Mammary epithelial cell (primary cell): ENCODE measurements at regions of chr9 and their contacts with region 1.

Region 1: GRCh38 chr9:5437254-5438216 is at the start of gene PLGRKT:
- DNase-seq: peak; percentile 89
- H3K4me3 ChIP-seq: peak within 1 kb of the TSS; percentile 67 to 87 (median 75)
- H3K27ac ChIP-seq: peak within 1 kb of the TSS; percentile 82
- H3K4me1 ChIP-seq: peaks cover 30% of the 10 kb centered on the region
- H3K27me3 ChIP-seq: no peaks in the 10 kb centered on the region
- CTCF ChIP-seq: peak in 1 of 2 donors; percentile 26
- total RNA-seq, gene PLGRKT: 13.3 to 31.2 TPM

Region 2: DNA sequence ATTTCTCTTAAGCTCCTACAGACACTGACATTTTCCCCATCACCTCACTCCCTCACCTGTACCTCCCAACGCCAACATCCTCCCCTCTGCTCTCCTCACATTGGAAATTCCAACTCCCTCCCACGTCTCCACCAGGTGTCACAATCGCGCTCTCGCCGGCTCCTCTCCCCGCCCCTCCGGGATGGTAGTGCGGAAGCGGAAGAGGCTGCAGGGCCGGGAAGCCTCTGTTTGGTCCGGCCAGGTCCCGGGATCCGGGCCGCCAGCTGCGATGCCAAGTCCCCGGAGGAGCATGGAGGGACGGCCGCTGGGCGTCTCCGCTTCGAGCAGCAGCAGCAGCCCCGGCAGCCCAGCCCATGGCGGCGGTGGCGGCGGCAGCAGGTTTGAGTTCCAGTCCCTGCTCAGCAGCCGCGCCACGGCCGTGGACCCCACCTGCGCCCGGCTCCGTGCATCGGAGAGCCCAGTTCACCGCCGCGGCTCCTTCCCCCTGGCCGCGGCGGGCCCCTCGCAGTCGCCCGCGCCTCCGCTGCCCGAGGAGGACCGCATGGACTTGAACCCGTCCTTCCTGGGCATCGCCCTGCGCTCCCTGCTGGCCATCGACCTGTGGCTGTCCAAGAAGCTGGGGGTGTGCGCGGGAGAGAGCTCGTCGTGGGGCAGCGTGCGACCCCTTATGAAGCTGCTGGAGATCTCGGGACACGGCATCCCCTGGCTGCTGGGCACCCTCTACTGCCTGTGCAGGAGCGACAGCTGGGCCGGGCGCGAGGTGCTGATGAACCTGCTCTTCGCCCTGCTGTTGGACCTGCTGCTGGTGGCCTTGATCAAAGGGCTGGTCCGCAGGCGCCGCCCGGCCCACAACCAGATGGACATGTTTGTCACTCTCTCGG is 775.2 kb before region 1 on chr9 and contains the start of gene PLPP6:
- CTCF ChIA-PET with region 1: no interaction called
- dilution Hi-C with region 1: no loop called
- in situ Hi-C with region 1: no loop called
- intact Hi-C with region 1: loop called (anchors 10 kb)
- DNase-seq: peak; percentile 95
- H3K4me3 ChIP-seq: peak within 1 kb of the TSS; percentile 76 to 92 (median 87)
- H3K27ac ChIP-seq: peak within 1 kb of the TSS; percentile 60
- H3K4me1 ChIP-seq: peaks cover 49% of the 10 kb centered on the region
- H3K27me3 ChIP-seq: no peaks in the 10 kb centered on the region
- CTCF ChIP-seq: peak in 1 of 2 donors; percentile 56
- total RNA-seq, gene PLPP6: 10.9 to 12.0 TPM

Region 3: GRCh38 chr9:4740638-4741364 is 696.7 kb before region 1 on chr9 and contains the start of gene AK3:
- CTCF ChIA-PET with region 1: interaction called, 6 read pairs
- dilution Hi-C with region 1: no loop called
- in situ Hi-C with region 1: no loop called
- intact Hi-C with region 1: loop called (anchors 5 kb)
- DNase-seq: peak; percentile 79
- H3K4me3 ChIP-seq: peak within 1 kb of the TSS; percentile 76 to 82 (median 80)
- H3K27ac ChIP-seq: peak within 1 kb of the TSS; percentile 73
- H3K4me1 ChIP-seq: peaks cover 37% of the 10 kb centered on the region
- H3K27me3 ChIP-seq: no peaks in the 10 kb centered on the region
- CTCF ChIP-seq: peak in 1 of 2 donors; percentile 41
- total RNA-seq, gene AK3: 36.5 to 73.3 TPM

Region 4: GRCh38 chr9:4750023-4750673 is 687.4 kb before region 1 on chr9:
- CTCF ChIA-PET with region 1: no interaction called
- dilution Hi-C with region 1: no loop called
- in situ Hi-C with region 1: loop called in 1 of 2 experiments (anchors 25 kb)
- intact Hi-C with region 1: loop called (anchors 5 kb)
- DNase-seq: peak; percentile 29
- H3K4me3 ChIP-seq: no peak overlapping the region
- H3K27ac ChIP-seq: no peak overlapping the region
- H3K4me1 ChIP-seq: no peaks in the 10 kb centered on the region
- H3K27me3 ChIP-seq: no peaks in the 10 kb centered on the region
- CTCF ChIP-seq: peak; percentile 61 to 65

Region 5: GRCh38 chr9:5186416-5187169 is 250.9 kb before region 1 on chr9:
- CTCF ChIA-PET with region 1: interaction called, 8 read pairs
- dilution Hi-C with region 1: no loop called
- in situ Hi-C with region 1: loop called in 1 of 2 experiments (anchors 25 kb)
- intact Hi-C with region 1: loop called (anchors 1 kb)
- DNase-seq: peak; percentile 55
- H3K4me3 ChIP-seq: no peak overlapping the region
- H3K27ac ChIP-seq: no peak overlapping the region
- H3K4me1 ChIP-seq: no peaks in the 10 kb centered on the region
- H3K27me3 ChIP-seq: no peaks in the 10 kb centered on the region
- CTCF ChIP-seq: peak; percentile 71 to 87

Region 6: DNA sequence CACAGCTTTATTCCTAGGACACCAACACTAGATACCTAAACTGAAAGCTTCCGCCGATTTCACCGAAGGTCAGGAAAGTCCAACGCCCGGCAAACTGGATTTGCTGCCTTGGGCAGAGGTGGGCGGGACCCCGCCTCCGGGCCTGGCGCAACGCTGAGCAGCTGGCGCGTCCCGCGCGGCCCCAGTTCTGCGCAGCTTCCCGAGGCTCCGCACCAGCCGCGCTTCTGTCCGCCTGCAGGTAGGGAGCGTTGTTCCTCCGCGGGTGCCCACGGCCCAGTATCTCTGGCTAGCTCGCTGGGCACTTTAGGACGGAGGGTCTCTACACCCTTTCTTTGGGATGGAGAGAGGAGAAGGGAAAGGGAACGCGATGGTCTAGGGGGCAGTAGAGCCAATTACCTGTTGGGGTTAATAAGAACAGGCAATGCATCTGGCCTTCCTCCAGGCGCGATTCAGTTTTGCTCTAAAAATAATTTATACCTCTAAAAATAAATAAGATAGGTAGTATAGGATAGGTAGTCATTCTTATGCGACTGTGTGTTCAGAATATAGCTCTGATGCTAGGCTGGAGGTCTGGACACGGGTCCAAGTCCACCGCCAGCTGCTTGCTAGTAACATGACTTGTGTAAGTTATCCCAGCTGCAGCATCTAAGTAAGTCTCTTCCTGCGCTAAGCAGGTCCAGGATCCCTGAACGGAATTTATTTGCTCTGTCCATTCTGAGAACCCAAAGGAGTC is 13.0 kb after region 1 on chr9 and contains the start of gene CD274:
- CTCF ChIA-PET with region 1: no interaction called
- dilution Hi-C with region 1: no loop called
- in situ Hi-C with region 1: no loop called
- intact Hi-C with region 1: loop called (anchors 1 kb)
- DNase-seq: peak; percentile 97
- H3K4me3 ChIP-seq: peak within 1 kb of the TSS; percentile 66 to 88 (median 73)
- H3K27ac ChIP-seq: peak within 1 kb of the TSS; percentile 91
- H3K4me1 ChIP-seq: peaks cover 75% of the 10 kb centered on the region
- H3K27me3 ChIP-seq: no peaks in the 10 kb centered on the region
- CTCF ChIP-seq: peak; percentile 48 to 86
- total RNA-seq, gene CD274: 19.5 to 30.6 TPM

Region 7: DNA sequence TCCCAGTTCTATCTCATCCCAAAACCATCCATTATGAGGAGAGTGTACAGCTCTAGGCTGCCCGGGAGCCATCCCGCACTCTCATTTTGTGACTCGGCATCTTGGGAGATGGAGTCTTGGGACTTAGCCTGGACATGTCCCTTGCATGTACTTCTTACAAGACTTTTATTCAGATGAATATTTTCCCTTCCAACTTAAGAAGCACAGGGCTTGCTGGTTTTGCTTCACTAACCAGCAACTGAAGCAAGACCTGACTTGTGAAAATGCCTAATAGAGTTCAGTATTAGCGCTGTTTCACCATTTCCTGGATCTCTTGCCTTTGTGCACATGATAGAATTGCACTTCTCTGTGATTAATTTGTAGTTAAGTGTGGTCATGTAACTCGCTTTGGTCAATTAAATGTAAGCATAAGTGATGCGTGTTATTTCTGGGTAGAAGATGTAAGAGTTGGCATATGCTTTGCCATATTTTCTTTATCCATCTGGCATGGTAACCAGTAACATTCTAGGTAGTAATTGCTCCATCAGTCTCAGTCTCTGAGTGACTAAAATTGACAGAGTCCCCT is 128.6 kb after region 1 on chr9:
- CTCF ChIA-PET with region 1: interaction called, 11 read pairs
- dilution Hi-C with region 1: loop called (anchors 10 kb)
- in situ Hi-C with region 1: no loop called
- intact Hi-C with region 1: no loop called
- DNase-seq: peak; percentile 91
- H3K4me3 ChIP-seq: no peak overlapping the region
- H3K27ac ChIP-seq: peak overlapping the region; percentile 87
- H3K4me1 ChIP-seq: peaks cover 44% of the 10 kb centered on the region
- H3K27me3 ChIP-seq: no peaks in the 10 kb centered on the region
- CTCF ChIP-seq: no peak